CD4-positive, alpha-beta memory T cell (primary cell): ENCODE measurements at regions of chr7 and their contacts with region 1.

Region 1: DNA sequence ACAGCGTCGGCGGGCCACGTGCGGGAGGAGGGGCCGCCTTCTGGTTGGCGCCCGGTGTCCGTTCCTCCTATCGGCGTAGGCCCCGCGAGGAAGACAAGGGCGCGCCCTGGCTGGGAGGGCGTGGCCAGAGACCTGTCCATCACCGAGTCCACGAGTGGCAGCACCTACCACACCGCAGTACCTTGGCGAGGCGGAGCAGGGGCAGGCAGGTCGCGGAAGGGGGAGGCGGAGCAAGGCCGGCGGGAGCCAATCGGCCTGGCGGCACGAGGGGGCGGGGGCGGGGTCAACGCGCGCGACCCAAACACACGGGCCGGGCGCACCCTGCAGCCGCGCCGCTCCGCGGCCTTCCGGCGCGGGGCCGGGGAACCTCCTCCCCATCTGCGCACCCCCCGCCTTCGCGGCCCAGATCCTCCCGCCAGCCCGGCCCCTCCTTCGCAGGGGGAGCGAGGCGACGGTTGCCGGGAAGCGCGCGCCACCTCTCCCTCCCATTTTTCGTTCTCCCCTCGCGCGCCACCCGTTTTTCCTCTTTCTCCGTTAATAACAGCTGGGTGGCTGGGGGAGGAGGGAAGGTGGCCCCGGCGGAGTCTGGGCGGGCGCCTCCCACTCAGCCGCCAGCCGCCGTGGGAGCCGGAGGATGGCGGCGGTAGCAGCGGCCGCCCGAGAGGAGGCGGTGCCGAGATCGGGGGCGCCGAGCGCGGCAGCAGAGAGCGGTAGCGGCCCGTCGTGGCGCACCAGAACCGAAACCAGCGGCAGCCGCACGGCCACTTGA is at the start of gene ZNRF2:
- DNase-seq: peak; percentile 97 to 100 (median 99)
- H3K4me3 ChIP-seq: peak within 1 kb of the TSS; percentile 57 to 62
- H3K4me3 Mint-ChIP-seq: peak within 1 kb of the TSS; percentile 83 to 95 (median 87)
- H3K27ac ChIP-seq: peak within 1 kb of the TSS; percentile 68
- H3K27ac Mint-ChIP-seq: peak within 1 kb of the TSS; percentile 72 to 97 (median 95)
- H3K4me1 ChIP-seq: peaks cover 44% of the 10 kb centered on the region
- H3K4me1 Mint-ChIP-seq: peaks cover 32 to 55% (median 38%) of the 10 kb centered on the region in 4 donors
- H3K27me3 ChIP-seq: no peaks in the 10 kb centered on the region
- H3K27me3 Mint-ChIP-seq: peaks cover 0 to 1% of the 10 kb centered on the region in 2 donors
- total RNA-seq, gene ZNRF2: 37.3 to 39.4 TPM

Region 2: DNA sequence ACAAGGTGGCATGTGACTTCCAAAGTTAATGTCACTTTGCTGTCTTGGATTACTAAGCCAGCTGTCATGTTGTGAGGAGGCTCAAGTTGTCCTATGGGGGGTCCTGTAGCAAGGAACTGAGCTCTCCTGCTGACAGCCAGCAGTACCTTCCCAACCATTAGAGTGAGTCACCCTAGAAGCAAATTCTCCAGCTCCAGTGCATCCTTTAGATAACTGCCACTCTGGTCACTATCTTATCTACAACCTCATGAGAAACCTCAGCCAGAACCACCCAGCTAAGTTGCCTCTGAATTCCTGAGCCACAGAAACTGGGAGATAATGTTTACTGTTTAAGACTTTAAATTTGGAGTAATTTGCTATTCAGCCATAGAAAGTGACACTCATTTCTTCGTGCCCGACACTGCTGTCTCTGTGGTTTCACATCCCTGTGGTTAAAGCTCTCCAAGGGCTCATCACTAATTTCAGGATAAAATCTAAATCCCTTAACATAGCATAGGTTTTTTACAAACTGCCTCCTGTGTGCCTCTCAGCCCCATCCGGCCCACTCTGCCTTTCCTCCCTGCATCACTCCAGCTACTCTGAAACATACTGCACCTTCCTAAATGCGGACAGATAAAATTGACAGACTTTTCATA is 637.3 kb before region 1 on chr7:
- CTCF ChIA-PET with region 1: no interaction called
- POLR2A ChIA-PET with region 1: no interaction called
- intact Hi-C with region 1: no loop called
- DNase-seq: no peak
- H3K4me3 ChIP-seq: no peak overlapping the region
- H3K4me3 Mint-ChIP-seq: no peak overlapping the region
- H3K27ac ChIP-seq: no peak overlapping the region
- H3K27ac Mint-ChIP-seq: no peak overlapping the region
- H3K4me1 ChIP-seq: no peaks in the 10 kb centered on the region
- H3K4me1 Mint-ChIP-seq: no peaks in the 10 kb centered on the region
- H3K27me3 ChIP-seq: no peaks in the 10 kb centered on the region
- H3K27me3 Mint-ChIP-seq: peaks cover 2 to 4% of the 10 kb centered on the region in 2 donors

Region 3: DNA sequence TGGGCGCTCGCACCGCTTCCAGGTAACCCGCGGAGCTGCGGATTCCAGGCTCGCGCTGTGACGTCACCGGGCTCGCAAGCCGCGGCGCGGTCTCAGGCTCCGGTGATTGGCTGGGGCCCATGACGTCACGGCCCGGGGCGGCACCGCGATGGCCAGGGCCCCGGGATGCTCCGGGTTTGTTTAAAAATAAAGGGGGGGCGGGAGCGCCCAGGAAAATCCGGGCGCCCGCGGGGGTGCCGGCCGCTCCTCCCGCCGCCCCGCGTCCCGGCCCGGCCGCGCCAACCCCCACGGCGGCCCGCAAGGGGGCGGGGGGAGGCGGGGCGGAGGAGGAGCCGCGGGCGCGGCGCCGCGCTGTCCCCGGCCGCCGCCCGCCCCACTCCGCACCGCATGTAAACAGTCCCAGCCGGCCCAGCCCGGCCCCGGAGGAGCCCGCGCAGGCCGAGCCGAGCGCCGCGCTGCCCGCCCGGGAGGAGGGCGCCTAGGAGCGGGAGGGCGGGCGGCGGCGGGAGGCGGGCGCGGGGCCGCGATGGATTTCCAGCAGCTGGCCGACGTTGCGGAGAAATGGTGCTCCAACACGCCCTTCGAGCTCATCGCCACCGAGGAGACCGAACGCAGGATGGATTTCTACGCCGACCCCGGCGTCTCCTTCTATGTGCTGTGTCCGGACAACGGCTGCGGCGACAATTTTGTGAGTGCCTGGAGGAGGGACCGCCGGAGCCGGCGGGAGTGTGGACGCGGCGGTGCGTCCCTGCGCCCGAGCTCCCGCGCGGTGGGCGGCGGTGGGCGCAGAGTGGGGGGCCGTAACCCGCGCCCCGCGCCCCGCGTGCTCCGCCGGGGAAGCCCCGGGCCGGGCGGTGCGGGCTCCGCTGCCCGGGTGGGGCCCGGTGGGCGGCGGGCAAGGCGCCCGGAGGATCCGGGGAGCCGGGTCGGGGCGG is 149.6 kb before region 1 on chr7 and contains the start of gene MTURN:
- CTCF ChIA-PET with region 1: no interaction called
- POLR2A ChIA-PET with region 1: interaction called, 12 read pairs
- intact Hi-C with region 1: loop called (anchors 1 kb)
- DNase-seq: peak; percentile 86 to 92 (median 89)
- H3K4me3 ChIP-seq: peak within 1 kb of the TSS; percentile 66 to 69
- H3K4me3 Mint-ChIP-seq: peak within 1 kb of the TSS; percentile 87 to 96 (median 94)
- H3K27ac ChIP-seq: peak within 1 kb of the TSS; percentile 17
- H3K27ac Mint-ChIP-seq: peak within 1 kb of the TSS; percentile 75 to 95 (median 95)
- H3K4me1 ChIP-seq: peaks cover 14% of the 10 kb centered on the region
- H3K4me1 Mint-ChIP-seq: peaks cover 5 to 23% (median 12%) of the 10 kb centered on the region in 4 donors
- H3K27me3 ChIP-seq: no peaks in the 10 kb centered on the region
- H3K27me3 Mint-ChIP-seq: no peaks in the 10 kb centered on the region
- total RNA-seq, gene MTURN: 18.1 to 19.2 TPM

Region 4: GRCh38 chr7:30322271-30323005 is 38.0 kb after region 1 on chr7:
- CTCF ChIA-PET with region 1: interaction called, 3 read pairs
- POLR2A ChIA-PET with region 1: interaction called, 54 read pairs
- intact Hi-C with region 1: loop called (anchors 1 kb)
- DNase-seq: peak in 4 of 5 donors; percentile 29 to 45 (median 37)
- H3K4me3 ChIP-seq: peak overlapping the region; percentile 32 to 39
- H3K4me3 Mint-ChIP-seq: peak overlapping the region; percentile 80 to 92 (median 89)
- H3K27ac ChIP-seq: peak overlapping the region; percentile 76
- H3K27ac Mint-ChIP-seq: peak overlapping the region; percentile 85 to 98 (median 96)
- H3K4me1 ChIP-seq: peaks cover 63% of the 10 kb centered on the region
- H3K4me1 Mint-ChIP-seq: peaks cover 53 to 82% (median 65%) of the 10 kb centered on the region in 4 donors
- H3K27me3 ChIP-seq: no peaks in the 10 kb centered on the region
- H3K27me3 Mint-ChIP-seq: no peaks in the 10 kb centered on the region

Region 5: DNA sequence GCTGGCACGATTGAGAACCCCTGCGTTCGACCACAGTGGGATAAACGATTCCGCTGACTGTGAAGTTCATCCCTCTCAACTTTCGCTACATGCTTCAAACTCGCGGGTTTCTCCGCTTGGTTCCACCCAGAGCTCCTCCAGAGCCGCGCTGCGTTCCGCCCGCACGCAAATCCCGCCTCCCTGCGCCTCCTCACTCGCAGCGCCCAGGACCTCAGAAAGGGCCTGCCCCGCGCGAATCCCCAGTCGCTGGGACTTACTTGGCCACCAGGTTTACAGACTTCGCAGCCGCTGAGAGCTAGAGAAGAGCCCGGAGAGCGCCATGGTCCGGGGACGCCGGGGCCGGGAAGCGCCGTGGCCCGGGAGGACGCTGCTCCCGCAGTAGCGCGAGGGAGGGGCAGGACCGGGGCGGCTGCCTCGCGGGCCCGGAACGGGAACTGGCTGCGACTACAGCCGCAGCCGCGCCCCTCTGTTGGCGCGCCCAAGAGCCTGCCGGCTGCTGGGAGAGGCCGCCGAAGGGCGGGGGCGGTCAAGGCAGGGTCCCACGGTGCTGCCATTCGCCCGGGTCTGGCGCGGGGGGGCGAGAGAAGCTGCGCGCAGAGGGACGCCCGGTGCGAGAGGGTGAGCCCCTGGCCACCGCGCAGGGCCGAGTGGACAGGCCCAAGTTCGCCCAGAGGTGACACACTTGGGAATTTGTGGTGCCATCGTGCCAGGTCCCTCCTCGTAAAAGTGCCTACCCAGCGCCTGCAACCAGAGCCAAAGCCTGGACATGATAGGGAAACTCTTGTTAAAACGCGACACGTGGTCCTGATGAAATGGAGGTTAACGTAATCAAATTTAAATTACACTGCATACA is 194.1 kb after region 1 on chr7 and contains the start of gene NOD1:
- CTCF ChIA-PET with region 1: no interaction called
- POLR2A ChIA-PET with region 1: interaction called, 8 read pairs
- intact Hi-C with region 1: loop called (anchors 1 kb)
- DNase-seq: peak; percentile 54 to 72 (median 67)
- H3K4me3 ChIP-seq: peak within 1 kb of the TSS; percentile 70 to 98
- H3K4me3 Mint-ChIP-seq: peak within 1 kb of the TSS in 7 of 8 donors; percentile 94 to 98 (median 95)
- H3K27ac ChIP-seq: peak within 1 kb of the TSS; percentile 79
- H3K27ac Mint-ChIP-seq: peak within 1 kb of the TSS in 6 of 7 donors; percentile 77 to 96 (median 90)
- H3K4me1 ChIP-seq: peaks cover 44% of the 10 kb centered on the region
- H3K4me1 Mint-ChIP-seq: peaks cover 36 to 59% (median 41%) of the 10 kb centered on the region in 4 donors
- H3K27me3 ChIP-seq: no peaks in the 10 kb centered on the region
- H3K27me3 Mint-ChIP-seq: no peaks in the 10 kb centered on the region
- total RNA-seq, gene NOD1: 20.7 to 21.3 TPM

Region 6: DNA sequence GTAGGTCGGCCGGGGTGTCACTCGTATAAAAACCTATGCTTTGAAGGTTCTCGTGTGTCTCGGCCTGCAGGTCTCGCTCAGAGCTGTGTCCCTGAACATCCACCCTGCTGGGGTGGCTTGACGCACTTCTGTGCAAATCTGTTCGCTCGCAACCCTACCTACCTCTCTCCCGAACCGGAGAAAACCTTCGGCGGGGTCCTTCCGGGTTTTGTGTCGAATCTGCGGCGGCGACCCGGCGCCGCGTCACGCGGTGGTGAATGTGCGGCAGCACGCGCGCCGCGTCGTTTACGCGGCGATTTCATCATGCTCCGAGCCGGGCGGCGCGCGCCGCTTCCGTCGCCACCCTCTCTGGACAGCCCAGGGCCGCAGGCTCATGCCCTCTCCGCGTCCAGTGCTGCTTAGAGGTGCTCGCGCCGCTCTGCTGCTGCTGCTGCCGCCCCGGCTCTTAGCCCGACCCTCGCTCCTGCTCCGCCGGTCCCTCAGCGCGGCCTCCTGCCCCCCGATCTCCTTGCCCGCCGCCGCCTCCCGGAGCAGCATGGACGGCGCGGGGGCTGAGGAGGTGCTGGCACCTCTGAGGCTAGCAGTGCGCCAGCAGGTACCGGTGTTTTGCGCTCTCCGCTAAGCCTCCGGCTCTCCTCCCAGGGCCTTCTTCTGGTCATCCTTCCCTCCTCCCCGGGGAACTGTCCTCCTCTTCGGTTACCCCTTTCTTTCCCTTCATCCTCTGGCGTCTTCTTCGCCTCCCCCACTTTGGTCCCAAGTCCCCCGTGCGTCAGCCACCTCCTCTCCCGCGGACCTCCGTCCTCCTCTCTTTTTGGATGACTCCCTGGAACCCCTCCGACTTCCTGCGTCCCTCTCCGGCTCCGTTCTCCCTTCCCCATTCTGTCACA is 310.3 kb after region 1 on chr7 and contains the start of gene GARS1:
- CTCF ChIA-PET with region 1: no interaction called
- POLR2A ChIA-PET with region 1: interaction called, 3 read pairs
- intact Hi-C with region 1: loop called (anchors 1 kb)
- DNase-seq: peak; percentile 89 to 91 (median 90)
- H3K4me3 ChIP-seq: peak within 1 kb of the TSS; percentile 97
- H3K4me3 Mint-ChIP-seq: peak within 1 kb of the TSS; percentile 95 to 100 (median 98)
- H3K27ac ChIP-seq: peak within 1 kb of the TSS; percentile 97
- H3K27ac Mint-ChIP-seq: peak within 1 kb of the TSS; percentile 98 to 100 (median 99)
- H3K4me1 ChIP-seq: peaks cover 48% of the 10 kb centered on the region
- H3K4me1 Mint-ChIP-seq: peaks cover 42 to 77% (median 58%) of the 10 kb centered on the region in 4 donors
- H3K27me3 ChIP-seq: no peaks in the 10 kb centered on the region
- H3K27me3 Mint-ChIP-seq: no peaks in the 10 kb centered on the region
- total RNA-seq, gene GARS1: 79.8 to 101 TPM